ENCODE measurements at regions of chr1 and their contacts with region 1.

Region 1: GRCh38 chr1:12596007-12596821 is 21.8 kb downstream of the DHRS3 start:
- DNase-seq: peak; percentile 92 to 98
- ATAC-seq: peak; percentile 81
- H3K4me3 ChIP-seq: peak overlapping the region; percentile 33; the same call in 2 of the 3 replicates
- H3K27ac ChIP-seq: peak overlapping the region; percentile 97 to 100
- H3K4me1 ChIP-seq: peaks cover 87% of the 10 kb centered on the region
- CTCF ChIP-seq: no peak
- EP300 ChIP-seq: peak; percentile 95 to 97; a peak in 3 of 5 replicates
- POLR2A ChIP-seq: peak; percentile 45
- RAD21 ChIP-seq: no peak; a peak in 3 of 5 replicates

Region 2: DNA sequence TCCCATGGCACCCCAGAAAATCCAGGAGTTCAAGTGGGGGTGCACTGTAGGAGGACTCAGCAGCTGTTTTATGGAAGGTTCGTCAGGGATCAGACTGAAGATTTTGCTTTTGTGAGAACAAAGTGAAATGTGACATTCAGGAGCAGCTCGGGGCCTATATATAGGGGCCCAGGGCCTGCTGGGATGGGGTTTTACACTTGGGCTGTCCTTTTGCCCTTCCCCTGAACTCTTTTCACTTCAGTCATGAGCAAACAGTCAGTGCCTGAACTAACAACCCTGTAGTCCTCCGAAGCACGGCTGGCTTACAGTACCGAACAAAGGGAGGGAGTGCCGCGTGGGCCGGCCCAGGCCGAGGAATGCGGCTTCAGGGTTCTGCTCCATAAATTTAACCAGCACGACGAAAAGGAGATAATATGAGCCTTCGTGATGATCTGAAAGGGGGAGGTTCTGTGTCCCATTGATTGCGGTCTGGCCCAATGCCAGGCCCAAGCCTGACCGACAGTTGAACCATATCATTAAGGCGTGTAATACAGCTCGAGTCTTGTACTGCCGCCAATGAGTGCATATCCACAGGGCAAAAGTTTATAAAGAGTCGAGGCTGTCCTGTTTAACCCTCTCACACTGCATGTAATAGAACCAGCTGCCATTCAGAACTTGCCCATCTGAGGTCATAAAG is 118.1 kb before region 1 on chr1:
- CTCF ChIA-PET with region 1: interaction called, 4 read pairs
- POLR2A ChIA-PET with region 1: interaction called, 54 read pairs
- DNase-seq: peak; percentile 49 to 97
- ATAC-seq: peak; percentile 87 to 95
- H3K4me3 ChIP-seq: no peak overlapping the region
- H3K27ac ChIP-seq: peak overlapping the region; percentile 92 to 93
- H3K4me1 ChIP-seq: peaks cover 72% of the 10 kb centered on the region
- CTCF ChIP-seq: no peak
- EP300 ChIP-seq: peak; percentile 75 to 96; a peak in 3 of 5 replicates
- POLR2A ChIP-seq: no peak
- RAD21 ChIP-seq: peak; percentile 28 to 66; a peak in 4 of 5 replicates

Region 3: GRCh38 chr1:12549460-12550349 is 46.5 kb before region 1 on chr1:
- CTCF ChIA-PET with region 1: interaction called, 4 read pairs
- POLR2A ChIA-PET with region 1: interaction called, 31 read pairs
- DNase-seq: peak; percentile 80 to 92
- ATAC-seq: peak; percentile 79 to 83
- H3K4me3 ChIP-seq: peak overlapping the region; percentile 26; the same call in 2 of the 3 replicates
- H3K27ac ChIP-seq: peak overlapping the region; percentile 81 to 98
- H3K4me1 ChIP-seq: peaks cover 38% of the 10 kb centered on the region
- CTCF ChIP-seq: no peak
- EP300 ChIP-seq: peak; percentile 52 to 70; a peak in 3 of 5 replicates
- POLR2A ChIP-seq: no peak
- RAD21 ChIP-seq: peak in 1 of 2 experiments; percentile 36; a peak in 3 of 5 replicates

Region 4: GRCh38 chr1:12572506-12572905 is 23.7 kb before region 1 on chr1:
- CTCF ChIA-PET with region 1: interaction called, 3 read pairs
- POLR2A ChIA-PET with region 1: interaction called, 12 read pairs
- DNase-seq: no peak
- ATAC-seq: peak in 1 of 2 experiments; percentile 14; a peak in 3 of 6 replicates
- H3K4me3 ChIP-seq: no peak overlapping the region
- H3K27ac ChIP-seq: peak overlapping the region; percentile 84 to 93
- H3K4me1 ChIP-seq: peaks cover 48% of the 10 kb centered on the region
- CTCF ChIP-seq: no peak
- EP300 ChIP-seq: no peak
- POLR2A ChIP-seq: no peak
- RAD21 ChIP-seq: no peak

Region 5: GRCh38 chr1:12810691-12811408 is 214.6 kb after region 1 on chr1:
- CTCF ChIA-PET with region 1: no interaction called
- POLR2A ChIA-PET with region 1: no interaction called
- DNase-seq: no peak
- ATAC-seq: peak; percentile 40 to 47; a peak in 5 of 6 replicates
- H3K4me3 ChIP-seq: no peak overlapping the region
- H3K27ac ChIP-seq: no peak overlapping the region
- H3K4me1 ChIP-seq: no peaks in the 10 kb centered on the region
- CTCF ChIP-seq: no peak
- EP300 ChIP-seq: no peak
- POLR2A ChIP-seq: no peak
- RAD21 ChIP-seq: no peak

Measured in A549 (cell line).